A673 (cell line): ENCODE measurements at regions of chr13 and their contacts with region 1.

Region 1: DNA sequence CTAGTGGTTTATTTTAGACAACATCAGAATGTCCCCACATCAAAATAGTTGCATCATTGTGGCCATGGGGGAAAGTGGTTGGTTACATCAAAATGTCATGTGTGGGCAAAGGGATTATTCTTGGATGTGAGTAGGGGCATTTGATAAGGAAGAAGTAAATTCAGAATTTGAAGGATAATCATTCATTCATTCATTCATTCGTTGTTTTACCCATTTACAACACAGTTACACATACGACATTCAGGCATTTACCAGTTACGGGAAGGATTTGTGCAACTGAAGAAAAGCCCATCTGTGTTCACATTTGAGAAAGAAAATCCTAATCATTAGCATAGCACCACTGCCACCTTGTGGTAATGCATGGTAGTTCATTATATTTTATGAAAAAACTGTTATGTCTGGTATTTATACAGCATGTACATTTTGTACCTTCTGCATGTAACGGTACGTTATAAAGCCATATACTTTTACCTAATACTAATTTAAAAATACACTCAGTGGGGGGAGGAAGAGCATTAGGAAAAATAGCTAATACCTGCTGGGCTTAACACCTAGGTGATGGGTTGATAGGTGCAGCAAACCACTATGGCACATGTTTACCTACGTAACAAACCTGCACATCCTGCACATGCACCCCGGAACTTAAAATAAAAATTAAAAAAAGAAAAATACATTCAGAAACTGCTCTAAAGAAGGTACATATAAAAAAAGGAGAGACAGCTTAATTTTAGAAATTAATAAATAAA is 62.1 kb downstream of the DGKH start:
- DNase-seq: peak; percentile 80
- H3K4me3 ChIP-seq: no peak overlapping the region
- H3K27ac ChIP-seq: no peak overlapping the region
- H3K4me1 ChIP-seq: no peaks in the 10 kb centered on the region
- H3K27me3 ChIP-seq: no peaks in the 10 kb centered on the region
- CTCF ChIP-seq: peak; percentile 76

Region 2: GRCh38 chr13:41384755-41385503 is 725.7 kb before region 1 on chr13:
- CTCF ChIA-PET with region 1: no interaction called
- POLR2A ChIA-PET with region 1: no interaction called
- intact Hi-C with region 1: loop called (anchors 10 kb)
- DNase-seq: peak; percentile 28
- H3K4me3 ChIP-seq: no peak overlapping the region
- H3K27ac ChIP-seq: no peak overlapping the region
- H3K4me1 ChIP-seq: no peaks in the 10 kb centered on the region
- H3K27me3 ChIP-seq: no peaks in the 10 kb centered on the region
- CTCF ChIP-seq: peak; percentile 53

Region 3: DNA sequence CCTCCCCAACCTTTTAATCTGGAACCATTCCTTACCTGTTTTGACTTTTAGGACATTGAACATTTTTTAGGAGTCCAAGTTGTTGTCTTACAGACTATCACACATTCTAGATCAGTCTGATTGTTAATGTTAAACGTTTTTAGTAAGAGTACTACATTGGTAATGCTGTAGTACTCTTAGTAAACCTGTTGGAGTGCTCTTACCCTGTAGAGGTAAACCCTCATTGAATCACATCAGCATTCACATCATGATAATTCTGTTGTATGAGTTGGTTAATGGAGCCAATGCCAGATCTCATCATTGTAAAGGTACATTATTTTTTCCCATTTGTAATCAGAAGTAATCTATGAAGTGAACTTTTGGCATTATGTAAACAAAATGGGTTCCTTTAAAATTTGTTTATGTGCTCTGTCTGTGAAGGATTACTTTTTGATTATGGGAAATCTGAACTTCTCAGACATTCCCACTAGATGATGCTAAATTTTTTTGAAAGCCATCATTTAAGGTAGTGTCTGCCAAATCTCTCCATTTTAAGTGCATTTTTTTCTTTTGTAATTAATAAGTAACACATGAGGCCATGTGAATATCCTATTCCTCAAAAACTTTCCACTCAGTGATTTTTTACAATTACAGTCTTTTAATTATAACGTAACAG is 204.9 kb before region 1 on chr13:
- CTCF ChIA-PET with region 1: no interaction called
- POLR2A ChIA-PET with region 1: no interaction called
- intact Hi-C with region 1: loop called (anchors 10 kb)
- DNase-seq: peak; percentile 48
- H3K4me3 ChIP-seq: no peak overlapping the region
- H3K27ac ChIP-seq: no peak overlapping the region
- H3K4me1 ChIP-seq: no peaks in the 10 kb centered on the region
- H3K27me3 ChIP-seq: no peaks in the 10 kb centered on the region
- CTCF ChIP-seq: peak; percentile 63